Endothelial cell of umbilical vein (primary cell): ENCODE measurements at regions of chr2 and their contacts with region 1.

Region 1: DNA sequence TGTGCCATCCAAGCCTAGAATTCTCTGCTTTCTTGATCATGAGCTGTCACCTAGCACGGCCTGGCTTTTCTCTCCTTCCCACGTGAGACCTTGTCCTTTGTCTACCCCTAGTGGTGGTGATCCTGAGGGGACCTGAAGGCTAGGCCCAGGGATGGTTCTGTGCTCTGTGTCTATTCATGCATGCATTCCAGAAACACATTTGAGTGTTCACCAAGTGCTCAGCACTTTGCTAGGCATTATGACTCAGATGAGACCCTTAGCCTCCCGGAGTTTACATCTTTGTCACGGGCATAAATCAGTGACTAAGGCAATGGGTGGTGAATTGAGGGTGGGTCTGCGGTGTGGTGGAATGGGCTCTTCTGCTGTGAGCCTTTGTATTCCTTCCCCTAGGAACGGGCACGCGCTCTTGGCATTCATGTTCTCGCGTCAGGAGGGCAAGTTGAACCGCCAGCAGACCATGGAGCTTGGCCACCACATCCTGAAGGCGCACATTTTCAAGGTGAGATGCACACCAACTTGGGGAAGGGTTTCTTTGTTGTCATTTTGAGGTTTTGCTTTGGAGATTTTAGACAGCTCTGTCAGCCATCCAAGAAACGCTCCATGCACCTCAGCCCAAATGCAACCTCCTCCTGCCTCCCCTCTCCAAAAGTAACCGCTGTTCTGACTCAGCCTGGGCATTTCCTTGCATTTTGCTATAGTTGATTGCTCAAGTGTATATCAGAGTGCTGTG is 100.9 kb downstream of the WDSUB1 start:
- DNase-seq: peak; percentile 44
- H3K4me3 ChIP-seq: no peak overlapping the region
- H3K27ac ChIP-seq: no peak overlapping the region
- H3K4me1 ChIP-seq: peaks cover 42% of the 10 kb centered on the region
- H3K27me3 ChIP-seq: no peaks in the 10 kb centered on the region
- CTCF ChIP-seq: peak; percentile 43 to 47
- POLR2A ChIP-seq: no peak

Region 2: DNA sequence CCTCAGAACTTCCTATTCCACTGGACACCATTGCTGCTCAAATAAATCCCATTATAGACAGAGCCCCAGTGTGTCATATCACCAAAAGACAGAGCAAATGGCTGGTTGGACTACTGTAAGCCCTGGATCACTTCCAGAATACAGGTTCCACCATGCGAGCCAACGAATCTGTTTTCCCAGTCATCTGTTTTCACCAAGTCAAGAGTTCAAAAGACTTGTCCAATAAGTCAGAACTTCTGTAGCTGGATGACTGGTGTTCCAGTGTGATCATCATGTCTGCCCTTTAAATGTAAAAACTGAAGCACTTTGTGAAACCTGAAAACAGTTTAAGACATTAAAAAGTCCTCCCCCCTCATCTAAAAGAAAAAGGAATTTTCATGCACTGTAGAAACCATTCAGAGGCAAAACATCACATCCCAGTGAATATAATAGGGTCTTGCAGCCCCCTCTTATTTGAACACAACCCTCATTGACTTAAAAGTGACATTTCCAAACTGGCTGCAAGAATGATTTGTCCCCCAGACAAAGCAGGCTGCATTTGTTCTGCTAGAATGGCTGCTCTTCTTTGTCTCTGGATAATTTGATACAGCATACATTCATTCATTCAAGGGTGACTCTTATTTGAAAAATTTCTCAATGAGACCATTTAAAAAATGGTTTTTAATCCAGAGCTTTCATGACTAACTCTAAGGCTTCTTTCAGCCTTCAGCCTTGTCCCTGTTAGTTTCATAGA is 281.7 kb before region 1 on chr2:
- CTCF ChIA-PET with region 1: no interaction called
- POLR2A ChIA-PET with region 1: no interaction called
- dilution Hi-C with region 1: no loop called
- intact Hi-C with region 1: loop called (anchors 1 kb)
- DNase-seq: no peak
- H3K4me3 ChIP-seq: no peak overlapping the region
- H3K27ac ChIP-seq: no peak overlapping the region
- H3K4me1 ChIP-seq: no peaks in the 10 kb centered on the region
- H3K27me3 ChIP-seq: no peaks in the 10 kb centered on the region
- CTCF ChIP-seq: no peak
- POLR2A ChIP-seq: no peak

Region 3: DNA sequence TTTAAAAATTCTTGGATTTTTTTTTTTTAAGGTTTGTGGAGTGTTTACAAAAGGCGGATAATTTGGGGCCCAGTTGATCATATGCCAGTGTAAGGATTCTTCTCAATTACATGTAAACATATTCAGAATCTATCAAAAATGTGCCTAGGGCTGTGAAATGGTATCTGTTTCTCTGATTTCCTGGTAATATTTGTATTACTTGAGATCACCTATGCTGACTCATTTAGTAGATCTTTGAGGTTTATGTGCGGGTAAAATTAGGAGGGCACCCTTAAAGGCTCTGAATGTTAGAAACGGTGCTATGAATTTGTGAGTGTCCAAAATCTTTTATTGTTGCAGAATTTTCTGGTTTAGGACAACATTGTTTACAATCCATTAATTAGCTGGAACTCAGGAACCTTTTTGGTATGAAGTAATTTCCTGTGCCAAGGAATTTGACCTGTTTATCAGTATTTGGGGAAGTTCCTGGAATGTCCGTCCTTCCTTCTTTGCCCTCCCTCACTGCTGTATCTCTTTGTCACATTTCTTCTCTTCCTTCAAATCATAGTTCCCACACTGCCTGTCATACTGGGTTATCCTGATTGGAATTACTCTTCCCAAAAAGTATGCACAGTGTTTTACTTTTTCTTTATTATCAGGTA is 86.6 kb before region 1 on chr2:
- CTCF ChIA-PET with region 1: no interaction called
- POLR2A ChIA-PET with region 1: interaction called, 13 read pairs
- dilution Hi-C with region 1: no loop called
- intact Hi-C with region 1: no loop called
- DNase-seq: peak; percentile 81
- H3K4me3 ChIP-seq: peak overlapping the region in 1 of 3 experiments; percentile 44
- H3K27ac ChIP-seq: peak overlapping the region; percentile 92
- H3K4me1 ChIP-seq: peaks cover 55% of the 10 kb centered on the region
- H3K27me3 ChIP-seq: no peaks in the 10 kb centered on the region
- CTCF ChIP-seq: no peak
- POLR2A ChIP-seq: peak; percentile 64

Region 4: DNA sequence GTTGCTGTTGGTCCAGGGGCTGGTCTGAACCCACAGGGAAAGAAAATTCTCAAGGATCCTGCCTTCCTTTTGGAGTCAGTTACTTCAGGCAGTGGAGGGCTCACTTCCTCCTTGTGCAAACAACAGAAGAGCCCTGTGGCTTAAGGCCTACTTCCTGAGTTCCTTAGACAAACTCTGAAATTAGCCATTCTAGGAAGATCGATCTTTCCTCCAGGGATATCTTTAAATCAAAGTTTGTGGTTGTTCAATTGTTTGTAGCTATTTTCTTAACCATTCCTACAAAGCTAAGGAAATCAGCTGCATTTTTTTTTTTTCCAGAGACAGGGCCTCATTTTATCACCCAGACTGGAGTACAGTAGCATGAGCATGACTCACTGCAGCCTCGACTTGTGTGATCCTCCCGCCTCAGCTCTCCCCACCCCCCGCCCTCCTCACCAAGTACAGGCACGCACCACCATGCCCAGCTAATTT is 61.1 kb before region 1 on chr2:
- CTCF ChIA-PET with region 1: interaction called, 3 read pairs
- POLR2A ChIA-PET with region 1: no interaction called
- dilution Hi-C with region 1: no loop called
- intact Hi-C with region 1: loop called (anchors 1 kb)
- DNase-seq: peak; percentile 92
- H3K4me3 ChIP-seq: no peak overlapping the region
- H3K27ac ChIP-seq: peak overlapping the region; percentile 84
- H3K4me1 ChIP-seq: peaks cover 35% of the 10 kb centered on the region
- H3K27me3 ChIP-seq: no peaks in the 10 kb centered on the region
- CTCF ChIP-seq: no peak
- POLR2A ChIP-seq: peak; percentile 52